IMR-90 (cell line): ENCODE measurements at regions of chr17 and their contacts with region 1.

Region 1: DNA sequence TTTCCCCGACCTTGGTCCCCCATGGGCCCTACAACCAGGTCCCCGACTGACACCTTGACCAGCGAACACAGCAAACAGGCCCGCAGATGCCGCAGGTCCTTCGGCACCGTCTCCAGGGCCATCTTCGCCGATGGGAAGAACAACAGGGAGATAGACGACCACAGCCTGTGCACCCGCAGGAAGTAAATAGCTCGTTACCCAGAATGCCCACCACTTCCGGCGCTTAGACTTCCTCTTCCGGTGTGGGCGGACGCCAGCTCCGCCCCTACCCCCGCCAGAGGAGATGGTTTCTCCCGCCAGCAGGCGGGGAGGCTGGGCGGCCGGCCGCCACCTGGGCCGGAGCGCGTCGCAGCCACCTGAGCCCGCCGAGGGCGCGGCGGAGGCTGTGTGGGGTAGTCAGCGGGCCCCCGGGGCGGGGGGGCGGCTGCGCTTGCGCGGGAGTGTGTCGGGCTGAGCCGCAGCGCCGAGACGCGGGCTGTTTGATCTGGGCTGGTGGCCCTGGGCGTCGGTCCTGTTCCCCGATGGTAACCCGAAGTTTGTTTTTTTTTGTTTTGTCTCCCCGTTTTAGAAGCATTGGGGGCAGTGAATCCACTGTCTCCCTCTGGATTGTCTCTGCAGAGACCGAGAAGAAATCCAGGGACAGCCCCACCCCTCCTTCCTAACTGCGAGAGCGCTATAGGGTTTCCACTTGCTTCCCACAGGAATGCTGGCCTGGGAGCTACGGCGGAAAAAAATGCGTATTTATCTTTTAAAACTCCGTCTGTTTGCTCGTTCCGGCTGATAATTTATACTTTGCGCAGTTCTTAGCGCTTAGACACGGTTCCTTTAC is at the start of gene SUPT4H1:
- DNase-seq: peak; percentile 92
- ATAC-seq: peak; percentile 87
- H3K4me3 ChIP-seq: peak within 1 kb of the TSS; percentile 94
- H3K27ac ChIP-seq: peak within 1 kb of the TSS; percentile 94
- H3K4me1 ChIP-seq: no peaks in the 10 kb centered on the region
- H3K27me3 ChIP-seq: no peaks in the 10 kb centered on the region
- CTCF ChIP-seq: no peak
- POLR2A ChIP-seq: peak; percentile 89
- RAD21 ChIP-seq: 0 out of 2 replicates have a peak, but pooled peaks have one; percentile 6
- total RNA-seq, gene SUPT4H1: 51.6 and 83.6 TPM in 2 replicates

Region 2: GRCh38 chr17:58303971-58304725 is 48.1 kb before region 1 on chr17:
- CTCF ChIA-PET with region 1: no interaction called
- POLR2A ChIA-PET with region 1: no interaction called
- dilution Hi-C with region 1: no loop called
- in situ Hi-C with region 1: no loop called
- intact Hi-C with region 1: no loop called
- DNase-seq: peak; percentile 23
- ATAC-seq: peak; percentile 83
- H3K4me3 ChIP-seq: no peak overlapping the region
- H3K27ac ChIP-seq: no peak overlapping the region
- H3K4me1 ChIP-seq: no peaks in the 10 kb centered on the region
- H3K27me3 ChIP-seq: peaks cover 7% of the 10 kb centered on the region; the same call in 1 of the 2 replicates
- CTCF ChIP-seq: peak; percentile 62
- POLR2A ChIP-seq: no peak
- RAD21 ChIP-seq: peak; percentile 52

Region 3: GRCh38 chr17:58317421-58318064 is 34.7 kb before region 1 on chr17:
- CTCF ChIA-PET with region 1: interaction called, 7 read pairs
- POLR2A ChIA-PET with region 1: interaction called, 11 read pairs
- dilution Hi-C with region 1: no loop called
- in situ Hi-C with region 1: no loop called
- intact Hi-C with region 1: loop called (anchors 2 kb)
- DNase-seq: peak; percentile 75
- ATAC-seq: peak; percentile 90
- H3K4me3 ChIP-seq: no peak overlapping the region
- H3K27ac ChIP-seq: no peak overlapping the region
- H3K4me1 ChIP-seq: no peaks in the 10 kb centered on the region
- H3K27me3 ChIP-seq: no peaks in the 10 kb centered on the region
- CTCF ChIP-seq: peak; percentile 88
- POLR2A ChIP-seq: peak; percentile 42; the same call in 1 of the 2 replicates
- RAD21 ChIP-seq: peak; percentile 96

Region 4: GRCh38 chr17:58324409-58325288 is 27.6 kb before region 1 on chr17:
- CTCF ChIA-PET with region 1: no interaction called
- POLR2A ChIA-PET with region 1: interaction called, 3 read pairs
- dilution Hi-C with region 1: no loop called
- in situ Hi-C with region 1: no loop called
- intact Hi-C with region 1: loop called (anchors 2 kb)
- DNase-seq: peak; percentile 18
- ATAC-seq: peak; percentile 87
- H3K4me3 ChIP-seq: peak overlapping the region; percentile 62
- H3K27ac ChIP-seq: peak overlapping the region; percentile 31
- H3K4me1 ChIP-seq: peaks cover 8% of the 10 kb centered on the region
- H3K27me3 ChIP-seq: peaks cover 5% of the 10 kb centered on the region; the same call in 1 of the 2 replicates
- CTCF ChIP-seq: no peak
- POLR2A ChIP-seq: no peak
- RAD21 ChIP-seq: no peak

Region 5: GRCh38 chr17:58337600-58338453 is 14.4 kb before region 1 on chr17:
- CTCF ChIA-PET with region 1: interaction called, 6 read pairs
- POLR2A ChIA-PET with region 1: interaction called, 13 read pairs
- dilution Hi-C with region 1: no loop called
- in situ Hi-C with region 1: no loop called
- intact Hi-C with region 1: no loop called
- DNase-seq: peak; percentile 96
- ATAC-seq: peak; percentile 91
- H3K4me3 ChIP-seq: no peak overlapping the region
- H3K27ac ChIP-seq: peak overlapping the region; percentile 98
- H3K4me1 ChIP-seq: peaks cover 38% of the 10 kb centered on the region
- H3K27me3 ChIP-seq: no peaks in the 10 kb centered on the region
- CTCF ChIP-seq: 0 out of 2 replicates have a peak, but pooled peaks have one; percentile 7
- POLR2A ChIP-seq: no peak; the same call in 1 of the 2 replicates
- RAD21 ChIP-seq: peak; percentile 18; the same call in 1 of the 2 replicates

Region 6: GRCh38 chr17:58417300-58418092 is 65.3 kb after region 1 on chr17 and contains the start of gene RNF43:
- CTCF ChIA-PET with region 1: interaction called, 5 read pairs
- POLR2A ChIA-PET with region 1: interaction called, 3 read pairs
- dilution Hi-C with region 1: no loop called
- in situ Hi-C with region 1: no loop called
- intact Hi-C with region 1: loop called (anchors 2 kb)
- DNase-seq: peak; percentile 71
- ATAC-seq: peak; percentile 99
- H3K4me3 ChIP-seq: peak within 1 kb of the TSS; percentile 8
- H3K27ac ChIP-seq: no peak within 1 kb of the TSS
- H3K4me1 ChIP-seq: no peaks in the 10 kb centered on the region
- H3K27me3 ChIP-seq: peaks cover 16% of the 10 kb centered on the region
- CTCF ChIP-seq: peak; percentile 81
- POLR2A ChIP-seq: no peak
- RAD21 ChIP-seq: peak; percentile 70
- total RNA-seq, gene RNF43: under 0.01 TPM in 2 replicates